Esophagus muscularis mucosa (tissue), 4 donors: ENCODE measurements at regions of chr4 and their contacts with region 1.

Region 1: DNA sequence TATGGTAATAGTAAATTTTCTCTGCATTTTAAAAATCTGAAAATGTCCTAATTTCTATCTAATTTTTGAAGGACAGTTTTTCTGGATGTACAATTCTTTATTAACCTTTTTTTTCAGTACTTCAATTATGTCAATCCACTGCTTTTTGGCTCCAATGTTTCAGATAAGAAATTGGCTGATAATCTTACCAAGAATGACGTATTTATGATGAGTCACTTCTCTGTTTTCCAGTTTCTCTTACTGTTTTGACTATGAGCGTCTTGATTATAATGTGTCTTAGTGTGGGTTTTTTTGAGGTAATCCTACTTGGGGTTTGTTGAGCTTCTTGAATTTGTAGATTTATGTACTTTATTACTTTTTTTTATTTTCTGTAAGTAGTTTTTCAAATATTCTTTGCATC is 47.2 kb downstream of the UGT2B11 start:
- DNase-seq: no peak
- H3K4me3 ChIP-seq: no peak overlapping the region
- H3K27ac ChIP-seq: no peak overlapping the region
- H3K4me1 ChIP-seq: no peaks in the 10 kb centered on the region
- H3K27me3 ChIP-seq: no peaks in the 10 kb centered on the region
- CTCF ChIP-seq: no peak
- EP300 ChIP-seq: no peak
- POLR2A ChIP-seq: no peak

Region 2: DNA sequence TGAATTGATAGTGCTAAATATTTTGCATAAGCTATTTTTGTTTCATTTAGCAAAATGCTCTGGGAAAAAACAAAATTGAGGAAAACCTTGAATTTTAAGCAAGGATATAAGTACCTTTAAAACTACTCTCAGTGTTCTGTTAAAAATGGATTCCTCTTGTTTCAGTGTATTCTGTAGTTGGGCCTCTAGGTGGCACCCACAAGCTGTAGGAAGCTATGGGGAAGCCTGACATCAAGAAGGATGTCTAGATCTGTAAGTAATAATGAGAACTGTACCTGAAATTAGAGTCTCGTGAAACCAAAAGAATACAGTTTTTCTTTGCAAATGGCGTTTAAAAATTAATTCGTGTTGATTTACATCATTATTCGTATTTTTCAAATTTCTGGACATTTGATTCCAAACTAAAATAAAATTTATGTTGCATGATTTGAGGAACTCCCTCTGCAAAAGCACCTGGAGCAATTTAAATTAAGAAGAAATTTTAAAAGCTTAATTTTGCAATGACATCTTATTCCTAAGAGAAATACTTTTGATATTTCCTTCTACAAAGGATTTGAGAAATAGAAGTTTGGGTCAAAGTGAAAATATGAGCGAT is 668.8 kb before region 1 on chr4:
- intact Hi-C with region 1: loop called (anchors 5 kb)
- DNase-seq: no peak
- H3K4me3 ChIP-seq: no peak overlapping the region
- H3K27ac ChIP-seq: no peak overlapping the region
- H3K4me1 ChIP-seq: no peaks in the 10 kb centered on the region
- H3K27me3 ChIP-seq: no peaks in the 10 kb centered on the region
- CTCF ChIP-seq: peak; percentile 41 to 76 (median 58)
- EP300 ChIP-seq: no peak
- POLR2A ChIP-seq: no peak

Region 3: DNA sequence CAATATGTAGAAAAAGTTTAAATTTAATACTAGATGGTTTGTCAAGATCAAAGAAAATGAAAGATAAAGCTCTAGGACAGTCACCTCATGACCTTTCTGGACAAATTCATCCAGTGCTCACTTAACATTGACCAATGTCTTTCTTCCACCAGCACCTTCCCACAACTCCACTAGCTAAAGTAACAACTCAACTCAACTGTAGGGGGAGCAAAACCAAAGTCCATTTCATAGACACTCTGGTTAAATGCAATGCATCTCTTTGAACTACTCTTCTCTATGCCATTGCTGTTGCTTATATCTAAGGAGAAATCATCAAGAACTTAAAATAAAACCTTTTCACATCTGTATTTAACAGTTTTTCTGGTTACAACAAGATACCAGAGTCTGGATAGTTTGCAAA is 303.3 kb after region 1 on chr4:
- intact Hi-C with region 1: no loop called
- DNase-seq: no peak
- H3K4me3 ChIP-seq: no peak overlapping the region
- H3K27ac ChIP-seq: no peak overlapping the region
- H3K4me1 ChIP-seq: no peaks in the 10 kb centered on the region
- H3K27me3 ChIP-seq: no peaks in the 10 kb centered on the region
- CTCF ChIP-seq: no peak
- EP300 ChIP-seq: no peak
- POLR2A ChIP-seq: no peak

Region 4: GRCh38 chr4:69689599-69689998 is 522.3 kb after region 1 on chr4:
- intact Hi-C with region 1: no loop called
- DNase-seq: no peak
- H3K4me3 ChIP-seq: no peak overlapping the region
- H3K27ac ChIP-seq: no peak overlapping the region
- H3K4me1 ChIP-seq: no peaks in the 10 kb centered on the region
- H3K27me3 ChIP-seq: no peaks in the 10 kb centered on the region
- CTCF ChIP-seq: peak; percentile 28 to 48 (median 47)
- EP300 ChIP-seq: no peak
- POLR2A ChIP-seq: no peak

Region 5: GRCh38 chr4:70196855-70197254 is 1029.6 kb after region 1 on chr4:
- intact Hi-C with region 1: no loop called
- DNase-seq: no peak
- H3K4me3 ChIP-seq: no peak overlapping the region
- H3K27ac ChIP-seq: no peak overlapping the region
- H3K4me1 ChIP-seq: no peaks in the 10 kb centered on the region
- H3K27me3 ChIP-seq: no peaks in the 10 kb centered on the region
- CTCF ChIP-seq: no peak
- EP300 ChIP-seq: no peak
- POLR2A ChIP-seq: no peak